ENCODE measurements at regions of chr15 and their contacts with region 1.

Region 1: GRCh38 chr15:70722266-70723121 is 40.9 kb downstream of the UACA start:
- DNase-seq: peak; percentile 52
- H3K4me3 ChIP-seq: peak overlapping the region in 1 of 2 experiments; percentile 19; a peak in 1 of 4 replicates
- H3K27ac ChIP-seq: no peak overlapping the region
- H3K4me1 ChIP-seq: peaks cover 0 to 11% of the 10 kb centered on the region in 2 experiments; a peak in 2 of 4 replicates
- H3K27me3 ChIP-seq: no peaks in the 10 kb centered on the region
- CTCF ChIP-seq: peak; percentile 88
- EP300 ChIP-seq: no peak
- RAD21 ChIP-seq: peak; percentile 67

Region 2: GRCh38 chr15:70672081-70672480 is 50.4 kb before region 1 on chr15:
- CTCF ChIA-PET with region 1: interaction called, 10 read pairs
- POLR2A ChIA-PET with region 1: no interaction called
- DNase-seq: no peak
- H3K4me3 ChIP-seq: no peak overlapping the region
- H3K27ac ChIP-seq: peak overlapping the region in 1 of 2 experiments; percentile 16; a peak in 1 of 4 replicates
- H3K4me1 ChIP-seq: peaks cover 6 to 30% of the 10 kb centered on the region in 2 experiments
- H3K27me3 ChIP-seq: no peaks in the 10 kb centered on the region
- CTCF ChIP-seq: no peak
- EP300 ChIP-seq: no peak
- RAD21 ChIP-seq: no peak

Region 3: DNA sequence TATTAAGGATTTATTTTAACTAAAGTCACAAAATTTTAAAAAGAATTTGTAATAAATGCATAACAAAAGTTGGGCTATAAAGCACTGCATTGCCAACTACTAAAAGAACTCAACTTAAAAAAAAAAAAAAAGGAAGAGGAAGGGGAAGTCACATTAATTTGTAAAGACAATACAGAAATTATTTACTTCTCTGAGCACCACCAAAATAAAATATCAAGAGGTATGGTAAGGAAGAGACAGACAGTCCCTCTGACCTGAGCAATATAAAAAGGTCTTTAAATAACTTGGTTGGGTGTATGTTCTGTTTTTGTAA is 42.6 kb before region 1 on chr15:
- CTCF ChIA-PET with region 1: interaction called, 58 read pairs
- POLR2A ChIA-PET with region 1: no interaction called
- DNase-seq: no peak
- H3K4me3 ChIP-seq: no peak overlapping the region
- H3K27ac ChIP-seq: peak overlapping the region in 1 of 2 experiments; percentile 11; a peak in 1 of 4 replicates
- H3K4me1 ChIP-seq: peaks cover 0 to 4% of the 10 kb centered on the region in 2 experiments; a peak in 1 of 4 replicates
- H3K27me3 ChIP-seq: no peaks in the 10 kb centered on the region
- CTCF ChIP-seq: no peak
- EP300 ChIP-seq: no peak
- RAD21 ChIP-seq: no peak

Region 4: DNA sequence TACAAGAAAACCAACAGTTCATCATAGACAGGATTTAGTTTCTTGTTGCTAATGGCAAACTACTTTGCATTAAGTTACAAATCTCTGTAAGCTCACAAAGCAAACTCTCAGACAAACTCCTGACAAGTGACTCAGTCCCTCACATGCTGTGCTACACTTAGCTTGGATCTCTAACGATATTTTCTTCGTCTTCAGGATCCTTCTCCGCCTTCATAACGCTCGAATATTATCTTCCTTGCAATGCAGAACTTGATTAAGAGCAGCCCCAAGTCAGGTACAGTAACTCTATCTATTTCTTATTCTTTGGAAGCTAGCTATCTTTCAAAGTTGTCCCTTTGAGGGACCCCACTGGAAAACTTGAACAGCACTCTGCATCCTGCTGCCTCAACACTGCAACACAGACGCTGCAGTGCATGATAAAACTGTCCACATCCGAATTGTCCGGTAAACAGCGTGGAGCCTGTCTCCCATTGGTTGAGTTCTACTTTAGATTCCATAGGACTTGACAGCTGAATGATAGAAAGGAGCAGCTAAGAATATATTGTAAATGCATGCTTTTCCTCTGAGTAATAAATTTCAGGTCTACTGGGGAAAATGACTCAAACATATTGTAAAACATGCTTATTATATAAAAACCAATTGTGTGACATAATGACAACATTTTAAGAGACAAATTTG is 20.5 kb before region 1 on chr15:
- CTCF ChIA-PET with region 1: interaction called, 11 read pairs
- POLR2A ChIA-PET with region 1: no interaction called
- DNase-seq: no peak
- H3K4me3 ChIP-seq: peak overlapping the region; percentile 39 to 61; a peak in 3 of 4 replicates
- H3K27ac ChIP-seq: peak overlapping the region; percentile 79 to 91
- H3K4me1 ChIP-seq: peaks cover 9 to 45% of the 10 kb centered on the region in 2 experiments
- H3K27me3 ChIP-seq: no peaks in the 10 kb centered on the region
- CTCF ChIP-seq: no peak
- EP300 ChIP-seq: no peak
- RAD21 ChIP-seq: no peak

Region 5: DNA sequence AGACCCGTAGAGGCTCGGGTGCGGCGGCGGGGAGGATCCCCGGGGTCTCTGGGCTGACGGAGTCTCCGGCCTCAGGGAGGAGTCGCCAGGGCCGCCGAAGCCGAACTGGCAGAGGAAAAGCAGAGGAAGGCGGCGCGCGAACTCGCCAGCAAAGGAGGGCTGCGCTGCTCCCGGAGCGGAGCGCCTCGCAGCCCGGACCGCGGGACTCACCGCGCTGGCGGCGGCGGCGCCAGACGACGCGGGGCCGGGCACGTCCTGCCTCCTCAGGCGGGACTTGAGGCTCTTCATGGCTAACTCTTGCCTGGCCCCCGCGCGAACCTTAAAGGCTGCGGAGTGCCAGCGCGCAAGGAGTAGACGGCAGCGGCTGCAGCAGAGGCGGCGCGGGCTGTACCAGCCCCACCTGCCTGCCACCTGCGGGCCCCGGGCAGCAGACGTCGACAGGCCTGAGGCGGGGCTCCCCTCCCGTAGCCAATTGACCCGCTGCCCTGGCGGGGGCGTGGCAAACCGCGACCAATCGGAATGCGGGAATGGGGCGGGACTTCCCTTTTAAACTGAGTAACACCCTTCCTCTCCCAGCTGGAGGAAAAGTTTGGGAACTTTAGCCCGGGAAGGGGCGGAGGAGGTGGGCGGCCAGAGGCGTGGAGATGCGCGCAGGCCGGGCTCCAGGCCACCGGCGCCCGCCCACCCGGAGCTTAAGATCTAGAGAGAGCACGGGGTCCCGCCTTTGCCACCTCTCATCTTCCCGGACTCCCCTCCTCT is 40.8 kb after region 1 on chr15 and contains the start of gene UACA:
- CTCF ChIA-PET with region 1: no interaction called
- POLR2A ChIA-PET with region 1: no interaction called
- DNase-seq: peak; percentile 99
- H3K4me3 ChIP-seq: peak within 1 kb of the TSS; percentile 79 to 94
- H3K27ac ChIP-seq: peak within 1 kb of the TSS; percentile 88 to 89
- H3K4me1 ChIP-seq: peaks cover 4 to 18% of the 10 kb centered on the region in 2 experiments; a peak in 3 of 4 replicates
- H3K27me3 ChIP-seq: no peaks in the 10 kb centered on the region
- CTCF ChIP-seq: no peak
- EP300 ChIP-seq: peak in 1 of 2 experiments; percentile 17; a peak in 1 of 4 replicates
- RAD21 ChIP-seq: no peak
- polyA plus RNA-seq, gene UACA: 35.9 and 57.1 TPM in 2 replicates

Measured in SK-N-SH (cell line).